Activated T-helper 1 cell treated with anti-CD3 and anti-CD28 coated beads, Interleukin-12 subunit alpha, Interleukin-12 subunit beta, Interleukin-2, Interleukin-4 antibody, amounts not matched to agents 30 ng/mL and 10 ng/mL and 1 ng/mL, durations not matched to agents 14 hours and 24 hours and 36 hours (primary cell): ENCODE measurements at regions of chr10 and their contacts with region 1.

Region 1: DNA sequence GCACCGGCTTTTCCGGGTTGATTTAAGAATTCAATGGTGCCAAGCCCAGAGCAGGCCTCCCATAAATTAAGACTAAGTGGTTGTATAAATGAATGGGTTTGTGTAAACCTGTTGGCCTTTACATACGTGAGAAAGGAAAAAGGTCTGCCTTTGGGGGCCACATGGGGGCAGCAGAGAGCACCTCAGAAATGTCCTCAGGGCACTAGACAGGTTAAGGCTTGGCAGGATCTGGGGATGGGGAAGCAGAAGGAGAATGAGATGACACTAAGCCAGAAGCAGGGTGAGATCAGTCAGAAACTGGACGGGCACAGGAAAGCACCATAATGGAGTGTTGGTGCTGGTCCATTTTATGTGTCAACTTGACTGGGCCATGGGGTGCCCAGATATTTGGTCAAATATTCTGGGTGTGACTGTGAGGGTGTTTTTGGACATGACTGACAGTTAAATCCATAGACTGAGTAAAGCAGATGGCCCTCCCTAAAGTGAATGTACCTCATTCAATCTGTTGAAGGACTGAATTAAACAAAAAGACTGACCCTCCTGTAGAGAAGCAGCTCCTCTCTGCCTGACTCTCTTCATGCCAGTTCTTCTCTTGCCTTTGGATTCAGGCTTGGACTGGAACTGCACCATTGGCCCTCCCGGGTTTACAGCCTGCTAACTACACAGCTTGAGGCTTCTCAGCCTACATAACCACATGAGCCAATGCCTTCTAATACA is 58.9 kb downstream of the FRMPD2 start:
- DNase-seq: peak; percentile 9
- H3K4me3 Mint-ChIP-seq: no peak overlapping the region
- H3K27ac Mint-ChIP-seq: no peak overlapping the region
- H3K4me1 Mint-ChIP-seq: no peaks in the 10 kb centered on the region
- H3K27me3 Mint-ChIP-seq: peaks cover 4% of the 10 kb centered on the region

Region 2: GRCh38 chr10:48289501-48290238 is 74.0 kb after region 1 on chr10:
- intact Hi-C with region 1: loop called (anchors 1 kb)
- DNase-seq: no peak
- H3K4me3 Mint-ChIP-seq: no peak overlapping the region
- H3K27ac Mint-ChIP-seq: no peak overlapping the region
- H3K4me1 Mint-ChIP-seq: no peaks in the 10 kb centered on the region
- H3K27me3 Mint-ChIP-seq: peaks cover 9% of the 10 kb centered on the region